Activated B cell treated with CpG ODN at 0.5 μM for 24 hours (primary cell): ENCODE measurements at regions of chr3 and their contacts with region 1.

Region 1: GRCh38 chr3:156151824-156152428 is 31.5 kb downstream of the KCNAB1 start:
- DNase-seq: no peak
- ATAC-seq: peak; percentile 37
- H3K4me3 Mint-ChIP-seq: no peak overlapping the region
- H3K27ac Mint-ChIP-seq: no peak overlapping the region
- H3K4me1 Mint-ChIP-seq: peaks cover 6% of the 10 kb centered on the region
- H3K27me3 Mint-ChIP-seq: no peaks in the 10 kb centered on the region
- CTCF ChIP-seq: no peak

Region 2: DNA sequence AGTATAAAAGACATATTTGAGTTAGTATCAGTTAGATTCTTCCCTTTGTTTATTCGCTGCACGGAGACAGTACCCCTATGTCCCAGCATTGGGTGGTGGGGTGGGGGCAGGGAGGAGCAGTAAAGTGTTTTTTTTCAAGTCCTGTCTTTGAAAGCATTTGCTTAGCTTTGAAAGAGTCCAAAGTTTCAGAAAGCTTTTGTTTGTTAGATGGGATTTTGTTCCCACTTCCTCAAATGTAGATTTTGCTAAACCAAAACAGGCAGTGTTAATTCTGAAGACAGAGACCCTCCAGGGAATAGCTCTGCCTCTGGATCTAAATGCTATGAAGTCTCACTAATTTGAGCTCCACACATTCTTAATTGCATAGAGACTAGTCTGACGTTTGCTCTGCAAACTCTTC is 146.2 kb before region 1 on chr3:
- CTCF ChIA-PET with region 1: no interaction called
- POLR2A ChIA-PET with region 1: no interaction called
- intact Hi-C with region 1: no loop called
- DNase-seq: no peak
- ATAC-seq: no peak
- H3K4me3 Mint-ChIP-seq: no peak overlapping the region
- H3K27ac Mint-ChIP-seq: no peak overlapping the region
- H3K4me1 Mint-ChIP-seq: no peaks in the 10 kb centered on the region
- H3K27me3 Mint-ChIP-seq: peaks cover 13% of the 10 kb centered on the region
- CTCF ChIP-seq: no peak

Region 3: DNA sequence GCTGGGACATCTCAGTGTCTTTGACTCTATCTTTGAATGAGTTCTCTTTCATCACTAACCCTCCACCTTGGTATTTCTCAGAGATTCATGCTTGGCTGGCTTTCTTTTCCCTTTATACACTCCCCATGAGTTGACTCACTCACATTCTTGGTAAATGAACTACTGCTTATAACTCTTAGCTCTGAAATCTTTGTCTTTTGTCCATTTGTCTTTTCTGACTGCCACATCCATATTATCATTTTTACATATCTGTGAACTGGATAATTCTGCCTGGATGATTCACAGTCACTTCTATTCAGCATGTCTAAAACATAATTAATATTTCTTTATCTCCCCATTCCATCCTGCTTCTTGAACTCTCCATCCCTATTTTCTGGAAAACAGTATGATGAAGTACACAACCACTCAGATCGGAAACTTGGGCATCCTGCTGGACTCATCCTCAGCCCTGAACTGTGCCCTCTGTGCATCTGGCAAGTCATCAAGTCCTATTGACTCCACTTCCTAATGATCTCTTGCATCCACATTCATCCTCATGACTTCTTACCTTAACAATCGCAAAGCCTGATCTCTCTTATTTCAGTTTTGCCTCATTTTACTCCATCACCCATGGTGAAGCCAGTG is 35.3 kb after region 1 on chr3:
- CTCF ChIA-PET with region 1: no interaction called
- POLR2A ChIA-PET with region 1: no interaction called
- intact Hi-C with region 1: no loop called
- DNase-seq: no peak
- ATAC-seq: no peak
- H3K4me3 Mint-ChIP-seq: no peak overlapping the region
- H3K27ac Mint-ChIP-seq: no peak overlapping the region
- H3K4me1 Mint-ChIP-seq: no peaks in the 10 kb centered on the region
- H3K27me3 Mint-ChIP-seq: no peaks in the 10 kb centered on the region
- CTCF ChIP-seq: no peak

Region 4: GRCh38 chr3:156382458-156383346 is 230.8 kb after region 1 on chr3:
- CTCF ChIA-PET with region 1: interaction called, 6 read pairs
- POLR2A ChIA-PET with region 1: no interaction called
- intact Hi-C with region 1: loop called (anchors 1 kb)
- DNase-seq: no peak
- ATAC-seq: no peak
- H3K4me3 Mint-ChIP-seq: no peak overlapping the region
- H3K27ac Mint-ChIP-seq: no peak overlapping the region
- H3K4me1 Mint-ChIP-seq: no peaks in the 10 kb centered on the region
- H3K27me3 Mint-ChIP-seq: peaks cover 8% of the 10 kb centered on the region
- CTCF ChIP-seq: no peak

Region 5: GRCh38 chr3:156509189-156510174 is 357.6 kb after region 1 on chr3:
- CTCF ChIA-PET with region 1: interaction called, 124 read pairs
- POLR2A ChIA-PET with region 1: no interaction called
- intact Hi-C with region 1: loop called (anchors 1 kb)
- DNase-seq: no peak
- ATAC-seq: peak; percentile 58
- H3K4me3 Mint-ChIP-seq: no peak overlapping the region
- H3K27ac Mint-ChIP-seq: no peak overlapping the region
- H3K4me1 Mint-ChIP-seq: no peaks in the 10 kb centered on the region
- H3K27me3 Mint-ChIP-seq: peaks cover 16% of the 10 kb centered on the region
- CTCF ChIP-seq: peak; percentile 21

Region 6: GRCh38 chr3:156542715-156543555 is 391.0 kb after region 1 on chr3:
- CTCF ChIA-PET with region 1: interaction called, 11 read pairs
- POLR2A ChIA-PET with region 1: no interaction called
- intact Hi-C with region 1: loop called (anchors 1 kb)
- DNase-seq: no peak
- ATAC-seq: no peak
- H3K4me3 Mint-ChIP-seq: no peak overlapping the region
- H3K27ac Mint-ChIP-seq: no peak overlapping the region
- H3K4me1 Mint-ChIP-seq: no peaks in the 10 kb centered on the region
- H3K27me3 Mint-ChIP-seq: no peaks in the 10 kb centered on the region
- CTCF ChIP-seq: no peak

Region 7: GRCh38 chr3:157088601-157089454 is 936.9 kb after region 1 on chr3:
- CTCF ChIA-PET with region 1: no interaction called
- POLR2A ChIA-PET with region 1: no interaction called
- intact Hi-C with region 1: loop called (anchors 2 kb)
- DNase-seq: peak; percentile 92
- ATAC-seq: peak; percentile 92
- H3K4me3 Mint-ChIP-seq: peak overlapping the region; percentile 90
- H3K27ac Mint-ChIP-seq: peak overlapping the region; percentile 90
- H3K4me1 Mint-ChIP-seq: peaks cover 26% of the 10 kb centered on the region
- H3K27me3 Mint-ChIP-seq: peaks cover 1% of the 10 kb centered on the region
- CTCF ChIP-seq: no peak

Region 8: DNA sequence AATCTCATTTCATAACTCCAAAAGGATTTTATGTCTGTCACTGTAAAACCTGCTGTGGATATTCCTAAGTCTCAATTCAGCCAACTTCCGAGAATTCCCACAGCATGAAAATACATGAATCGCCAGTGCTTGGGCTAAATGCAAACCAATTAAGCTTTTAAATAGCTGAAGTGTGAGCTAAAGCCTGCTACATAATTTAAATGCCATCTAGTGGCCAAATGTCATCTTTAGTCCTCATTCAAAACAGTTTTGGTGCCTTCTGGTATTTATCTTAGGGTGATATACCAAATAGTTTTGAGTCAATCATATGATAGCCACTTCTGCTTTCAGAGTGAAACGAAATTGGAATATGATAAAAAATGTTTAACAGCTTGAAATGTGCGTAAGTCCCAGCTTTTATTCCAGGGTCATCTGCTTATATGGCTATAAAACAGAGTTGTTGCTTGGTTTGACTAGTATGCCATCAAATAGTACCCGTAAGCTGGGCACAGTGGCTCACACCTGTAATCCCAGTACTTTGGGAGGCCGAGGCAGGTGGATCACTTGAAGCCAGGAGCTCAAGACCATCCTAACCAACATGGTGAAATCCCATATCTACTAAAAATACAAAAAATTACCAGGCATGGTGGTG is 1049.8 kb after region 1 on chr3:
- CTCF ChIA-PET with region 1: interaction called, 6 read pairs
- POLR2A ChIA-PET with region 1: no interaction called
- intact Hi-C with region 1: loop called (anchors 1 kb)
- DNase-seq: no peak
- ATAC-seq: peak; percentile 50
- H3K4me3 Mint-ChIP-seq: no peak overlapping the region
- H3K27ac Mint-ChIP-seq: no peak overlapping the region
- H3K4me1 Mint-ChIP-seq: peaks cover 4% of the 10 kb centered on the region
- H3K27me3 Mint-ChIP-seq: no peaks in the 10 kb centered on the region
- CTCF ChIP-seq: peak; percentile 47

Region 9: DNA sequence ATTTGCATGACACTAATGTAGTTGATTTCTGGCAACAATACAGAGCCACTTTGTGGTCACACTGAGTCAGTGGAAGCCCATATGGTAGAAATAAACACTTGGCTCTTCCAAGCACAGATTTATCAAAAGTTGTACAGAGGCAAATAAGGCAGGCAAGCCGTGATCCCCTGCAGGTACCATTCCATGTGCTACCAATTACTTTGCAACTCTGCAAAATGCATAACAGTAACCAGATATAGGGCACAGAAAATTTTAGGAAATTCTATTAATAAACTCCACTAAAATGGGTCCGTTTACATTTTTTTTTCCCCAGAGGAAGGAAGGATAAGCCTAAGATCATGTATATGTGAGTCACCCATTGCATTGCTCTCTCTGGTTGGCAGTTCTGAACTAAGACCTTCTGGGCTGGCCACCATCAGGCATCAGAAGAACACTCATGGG is 1181.6 kb after region 1 on chr3:
- CTCF ChIA-PET with region 1: no interaction called
- POLR2A ChIA-PET with region 1: no interaction called
- intact Hi-C with region 1: no loop called
- DNase-seq: no peak
- ATAC-seq: no peak
- H3K4me3 Mint-ChIP-seq: no peak overlapping the region
- H3K27ac Mint-ChIP-seq: no peak overlapping the region
- H3K4me1 Mint-ChIP-seq: peaks cover 2% of the 10 kb centered on the region
- H3K27me3 Mint-ChIP-seq: no peaks in the 10 kb centered on the region
- CTCF ChIP-seq: no peak

Region 10: DNA sequence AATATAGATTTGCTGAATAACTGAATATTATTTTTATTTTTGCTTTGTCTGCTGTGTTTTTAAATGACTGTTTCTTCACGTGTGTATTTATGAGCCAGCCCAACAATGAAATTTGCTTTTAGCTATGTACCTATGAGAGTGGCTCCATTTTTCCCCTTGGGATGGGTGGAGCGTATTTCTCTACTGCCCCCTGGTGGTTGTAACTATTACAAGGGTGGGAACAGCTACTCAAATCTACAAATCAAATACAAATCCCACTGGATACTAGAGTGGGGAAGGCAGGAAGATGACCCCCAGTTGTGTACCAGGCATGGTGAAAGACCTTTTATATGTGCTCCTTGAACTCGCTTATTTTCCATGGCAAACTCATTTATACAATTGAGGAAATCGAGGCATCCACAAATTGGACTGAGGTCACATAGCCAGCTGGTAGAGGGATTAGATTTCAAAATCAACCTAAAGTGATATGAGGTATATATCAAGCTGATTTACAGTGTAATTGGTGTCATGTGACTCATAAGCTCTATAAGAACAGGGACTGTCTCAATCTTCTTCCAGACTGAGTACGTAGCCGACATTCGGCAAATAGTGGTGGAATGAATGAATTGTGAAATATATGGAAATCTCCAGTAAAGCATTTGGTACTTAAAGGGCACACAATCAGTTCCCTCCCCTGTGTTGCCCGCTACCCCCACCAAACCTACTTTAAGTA is 1420.8 kb after region 1 on chr3:
- CTCF ChIA-PET with region 1: no interaction called
- POLR2A ChIA-PET with region 1: no interaction called
- intact Hi-C with region 1: loop called (anchors 5 kb)
- DNase-seq: no peak
- ATAC-seq: no peak
- H3K4me3 Mint-ChIP-seq: no peak overlapping the region
- H3K27ac Mint-ChIP-seq: no peak overlapping the region
- H3K4me1 Mint-ChIP-seq: no peaks in the 10 kb centered on the region
- H3K27me3 Mint-ChIP-seq: peaks cover 14% of the 10 kb centered on the region
- CTCF ChIP-seq: no peak